Caco-2 (cell line): ENCODE measurements at regions of chr21 and their contacts with region 1.

Region 1: GRCh38 chr21:15754640-15755039 is 24.9 kb downstream of the USP25 start:
- DNase-seq: no peak
- H3K4me3 ChIP-seq: no peak overlapping the region
- H3K4me3 Mint-ChIP-seq: no peak overlapping the region
- H3K27ac Mint-ChIP-seq: no peak overlapping the region
- H3K4me1 ChIP-seq: peaks cover 20% of the 10 kb centered on the region
- H3K4me1 Mint-ChIP-seq: peaks cover 37% of the 10 kb centered on the region
- H3K27me3 ChIP-seq: no peaks in the 10 kb centered on the region
- H3K27me3 Mint-ChIP-seq: no peaks in the 10 kb centered on the region
- CTCF ChIP-seq: no peak

Region 2: DNA sequence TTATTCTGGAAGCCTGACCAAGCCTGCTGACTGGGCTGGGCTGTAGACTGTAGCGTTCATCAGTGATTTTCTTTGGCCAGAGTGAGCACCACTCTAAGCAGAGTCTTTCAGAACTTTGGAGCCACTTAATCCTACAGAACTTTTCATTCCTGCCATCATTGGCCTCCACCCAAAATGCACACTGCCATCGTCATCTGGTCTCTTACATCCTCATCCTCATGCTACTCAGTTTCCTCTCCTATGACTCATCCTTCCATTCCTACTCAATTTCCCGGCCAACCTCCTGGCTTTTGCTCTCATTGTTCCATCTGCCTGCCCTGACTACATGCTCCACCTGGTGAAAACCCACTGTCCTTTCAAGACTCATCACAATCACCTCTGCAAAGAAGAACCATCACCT is 258.7 kb before region 1 on chr21:
- CTCF ChIA-PET with region 1: no interaction called
- POLR2A ChIA-PET with region 1: no interaction called
- intact Hi-C with region 1: loop called (anchors 5 kb)
- DNase-seq: no peak
- H3K4me3 ChIP-seq: no peak overlapping the region
- H3K4me3 Mint-ChIP-seq: no peak overlapping the region
- H3K27ac Mint-ChIP-seq: no peak overlapping the region
- H3K4me1 ChIP-seq: no peaks in the 10 kb centered on the region
- H3K4me1 Mint-ChIP-seq: peaks cover 5% of the 10 kb centered on the region
- H3K27me3 ChIP-seq: no peaks in the 10 kb centered on the region
- H3K27me3 Mint-ChIP-seq: no peaks in the 10 kb centered on the region
- CTCF ChIP-seq: no peak